T-cell (primary cell): ENCODE measurements at regions of chr12 and their contacts with region 1.

Region 1: GRCh38 chr12:106428384-106428783 is 70.8 kb downstream of the POLR3B start:
- DNase-seq: no peak
- ATAC-seq: no peak
- H3K4me3 ChIP-seq: no peak overlapping the region
- H3K4me3 Mint-ChIP-seq: no peak overlapping the region
- H3K27ac ChIP-seq: no peak overlapping the region
- H3K27ac Mint-ChIP-seq: no peak overlapping the region
- H3K4me1 ChIP-seq: no peaks in the 10 kb centered on the region
- H3K4me1 Mint-ChIP-seq: no peaks in the 10 kb centered on the region
- H3K27me3 ChIP-seq: no peaks in the 10 kb centered on the region
- H3K27me3 Mint-ChIP-seq: no peaks in the 10 kb centered on the region

Region 2: DNA sequence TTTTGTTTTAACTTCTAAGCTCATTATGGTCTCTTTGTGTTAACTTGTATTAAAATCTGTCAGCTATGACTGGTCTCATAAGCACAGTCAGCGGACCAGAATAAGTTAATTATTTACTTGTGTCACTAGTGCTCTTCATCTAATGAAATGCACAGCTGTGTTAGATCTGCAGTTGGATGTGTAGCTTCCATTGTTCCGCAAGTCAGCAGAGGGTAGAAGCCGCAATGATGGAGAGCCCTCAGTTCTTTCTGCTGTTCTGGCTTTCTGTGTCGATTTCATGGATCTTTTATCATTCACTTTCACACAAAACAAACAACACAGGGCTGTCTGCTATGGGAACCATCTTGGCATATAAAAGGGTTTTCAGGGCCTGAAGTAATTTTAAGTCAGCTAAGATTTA is 65.1 kb after region 1 on chr12:
- CTCF ChIA-PET with region 1: no interaction called
- POLR2A ChIA-PET with region 1: no interaction called
- DNase-seq: no peak
- ATAC-seq: no peak
- H3K4me3 ChIP-seq: no peak overlapping the region
- H3K4me3 Mint-ChIP-seq: no peak overlapping the region
- H3K27ac ChIP-seq: no peak overlapping the region
- H3K27ac Mint-ChIP-seq: no peak overlapping the region
- H3K4me1 ChIP-seq: no peaks in the 10 kb centered on the region
- H3K4me1 Mint-ChIP-seq: peaks cover 0 to 4% (median 0%) of the 10 kb centered on the region in 3 donors
- H3K27me3 ChIP-seq: no peaks in the 10 kb centered on the region
- H3K27me3 Mint-ChIP-seq: no peaks in the 10 kb centered on the region

Region 3: GRCh38 chr12:106645074-106645421 is 216.7 kb after region 1 on chr12:
- CTCF ChIA-PET with region 1: no interaction called
- POLR2A ChIA-PET with region 1: no interaction called
- DNase-seq: no peak
- ATAC-seq: no peak
- H3K4me3 ChIP-seq: no peak overlapping the region
- H3K4me3 Mint-ChIP-seq: no peak overlapping the region
- H3K27ac ChIP-seq: no peak overlapping the region
- H3K27ac Mint-ChIP-seq: no peak overlapping the region
- H3K4me1 ChIP-seq: no peaks in the 10 kb centered on the region
- H3K4me1 Mint-ChIP-seq: no peaks in the 10 kb centered on the region
- H3K27me3 ChIP-seq: peaks cover 2 to 5% of the 10 kb centered on the region in 2 experiments
- H3K27me3 Mint-ChIP-seq: peaks cover 3 to 16% of the 10 kb centered on the region in 2 donors

Region 4: DNA sequence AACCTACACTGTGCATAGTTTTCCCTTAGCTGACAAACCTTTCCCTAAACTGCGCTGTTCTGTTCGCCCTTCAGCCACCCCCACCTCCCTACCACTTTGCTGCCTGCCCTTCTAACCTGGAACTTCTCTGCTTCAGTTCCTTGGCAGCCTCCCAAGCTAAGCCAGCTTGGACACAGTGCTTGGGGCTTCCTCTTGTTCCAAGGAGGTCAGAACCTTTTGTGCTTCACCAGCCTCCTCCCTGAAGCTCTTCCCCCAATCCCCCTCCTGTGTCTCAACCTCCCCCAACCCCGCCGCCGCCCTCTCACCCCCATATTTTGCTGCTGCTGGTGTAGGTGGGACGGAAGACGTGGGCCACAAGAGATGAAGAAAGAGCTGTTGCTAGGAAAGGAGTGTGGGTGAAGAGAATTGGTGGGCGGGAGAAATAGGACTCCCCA is 338.0 kb after region 1 on chr12:
- CTCF ChIA-PET with region 1: interaction called in 1 of 2 experiments, 11 read pairs
- POLR2A ChIA-PET with region 1: no interaction called
- DNase-seq: no peak
- ATAC-seq: peak in 2 of 4 experiments; percentile 43 to 54
- H3K4me3 ChIP-seq: no peak overlapping the region
- H3K4me3 Mint-ChIP-seq: peak overlapping the region in 1 of 3 donors; percentile 4
- H3K27ac ChIP-seq: no peak overlapping the region
- H3K27ac Mint-ChIP-seq: peak overlapping the region in 1 of 2 donors; percentile 35
- H3K4me1 ChIP-seq: peaks cover 12 to 13% of the 10 kb centered on the region in 2 experiments
- H3K4me1 Mint-ChIP-seq: peaks cover 13 to 17% (median 17%) of the 10 kb centered on the region in 3 donors
- H3K27me3 ChIP-seq: peaks cover 0 to 6% of the 10 kb centered on the region in 2 experiments
- H3K27me3 Mint-ChIP-seq: no peaks in the 10 kb centered on the region